ENCODE measurements at regions of chr14 and their contacts with region 1.

Region 1: GRCh38 chr14:104985675-104986525 is at the start of gene CLBA1:
- DNase-seq: peak; percentile 93
- ATAC-seq: peak; percentile 92
- H3K4me3 Mint-ChIP-seq: peak within 1 kb of the TSS; percentile 63
- H3K27ac Mint-ChIP-seq: peak within 1 kb of the TSS; percentile 82
- H3K4me1 Mint-ChIP-seq: no peaks in the 10 kb centered on the region
- H3K27me3 Mint-ChIP-seq: peaks cover 2% of the 10 kb centered on the region
- total RNA-seq, gene CLBA1: 1.2 TPM

Region 2: DNA sequence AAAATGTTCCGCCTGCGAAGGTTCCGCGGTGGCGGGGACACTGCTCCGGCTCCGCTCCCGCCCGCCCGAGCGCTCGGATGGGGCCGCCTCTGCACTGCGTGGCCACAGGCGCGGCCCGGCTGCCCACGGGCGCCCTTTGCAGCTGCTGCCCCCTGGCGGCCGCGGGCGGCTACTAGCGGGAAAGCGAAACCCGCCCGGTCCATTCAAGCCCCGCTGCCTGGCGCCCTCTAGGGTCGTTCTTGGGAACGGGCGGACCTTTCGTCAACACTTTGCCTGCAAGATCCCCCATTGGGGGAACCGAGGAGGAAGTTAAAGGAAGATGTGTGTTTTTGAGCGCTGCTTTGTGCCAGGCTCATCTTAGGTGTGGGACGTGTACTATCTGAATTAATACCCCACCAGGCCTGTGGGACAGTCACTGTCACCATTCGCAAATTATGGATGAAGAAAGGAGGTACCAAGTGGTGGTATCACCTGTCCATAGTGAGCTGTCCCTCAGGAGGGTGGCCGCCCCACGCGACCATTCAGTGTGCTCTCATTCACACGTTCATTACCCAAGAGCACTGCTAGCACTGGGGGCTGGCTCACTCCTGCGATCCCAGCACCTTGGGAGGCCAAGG is 59.9 kb after region 1 on chr14:
- POLR2A ChIA-PET with region 1: interaction called, 12 read pairs
- DNase-seq: peak; percentile 97
- ATAC-seq: peak; percentile 85
- H3K4me3 Mint-ChIP-seq: peak overlapping the region; percentile 25
- H3K27ac Mint-ChIP-seq: peak overlapping the region; percentile 15
- H3K4me1 Mint-ChIP-seq: peaks cover 14% of the 10 kb centered on the region
- H3K27me3 Mint-ChIP-seq: peaks cover 5% of the 10 kb centered on the region

Region 3: DNA sequence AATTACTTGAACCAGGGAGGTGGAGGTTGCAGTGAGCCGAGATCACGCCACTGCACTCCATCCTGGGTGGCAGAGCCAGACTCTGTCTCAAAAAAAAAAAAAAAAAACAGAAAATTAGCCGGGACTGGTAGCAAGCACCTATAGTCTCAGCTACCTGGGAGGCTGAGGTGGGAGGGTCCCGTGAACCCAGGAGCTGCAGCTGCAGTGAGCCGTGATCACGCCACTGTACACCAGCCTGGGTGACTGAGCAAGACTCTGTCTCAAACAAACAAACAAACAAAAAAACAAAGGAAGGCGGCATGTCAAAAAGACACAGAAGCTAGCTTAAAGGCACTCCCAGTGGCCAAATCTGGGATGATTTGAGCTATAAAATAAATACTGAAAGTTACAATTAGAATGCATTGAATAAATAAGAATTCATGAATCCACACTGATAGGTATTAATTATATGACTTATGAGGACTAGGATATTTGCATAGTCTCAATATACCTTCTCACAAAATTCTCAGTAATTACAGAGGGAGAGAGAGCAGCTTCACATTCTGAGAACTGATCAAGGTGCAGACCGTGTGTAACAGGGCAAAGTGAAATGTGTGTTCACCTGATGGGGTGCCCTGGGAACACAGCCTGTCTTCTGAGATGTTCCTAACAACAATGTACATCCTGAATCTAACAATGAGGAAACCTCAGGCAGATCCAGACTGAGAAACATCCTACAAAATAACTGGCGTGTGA is 122.0 kb after region 1 on chr14:
- POLR2A ChIA-PET with region 1: no interaction called
- DNase-seq: no peak
- ATAC-seq: no peak
- H3K4me3 Mint-ChIP-seq: no peak overlapping the region
- H3K27ac Mint-ChIP-seq: no peak overlapping the region
- H3K4me1 Mint-ChIP-seq: peaks cover 3% of the 10 kb centered on the region
- H3K27me3 Mint-ChIP-seq: peaks cover 37% of the 10 kb centered on the region

Measured in activated naive CD8-positive, alpha-beta T cell treated with anti-CD3 and anti-CD28 coated beads, Interleukin-2, amount 10 ng/mL, durations not matched to agents 7 days and 5 days (primary cell).